ENCODE measurements at regions of chr10 and their contacts with region 1.

Region 1: GRCh38 chr10:68988530-68989316 is at the start of gene KIFBP:
- DNase-seq: peak; percentile 47 to 95 (median 79)
- ATAC-seq: peak; percentile 81
- H3K4me3 ChIP-seq: peak within 1 kb of the TSS; percentile 68 to 85
- H3K4me3 Mint-ChIP-seq: peak within 1 kb of the TSS; percentile 99
- H3K27ac ChIP-seq: peak within 1 kb of the TSS; percentile 31 to 79
- H3K27ac Mint-ChIP-seq: peak within 1 kb of the TSS; percentile 95
- H3K4me1 ChIP-seq: peaks cover 29% of the 10 kb centered on the region
- H3K4me1 Mint-ChIP-seq: peaks cover 56% of the 10 kb centered on the region
- H3K27me3 ChIP-seq: no peaks in the 10 kb centered on the region
- H3K27me3 Mint-ChIP-seq: no peaks in the 10 kb centered on the region
- CTCF ChIP-seq: peak; percentile 41
- total RNA-seq, gene KIFBP: 4.6 to 5.8 TPM

Region 2: GRCh38 chr10:68963151-68963550 is 25.6 kb before region 1 on chr10:
- CTCF ChIA-PET with region 1: no interaction called
- POLR2A ChIA-PET with region 1: no interaction called
- intact Hi-C with region 1: loop called in 1 of 2 experiments (anchors 2 kb)
- DNase-seq: no peak
- ATAC-seq: no peak
- H3K4me3 ChIP-seq: no peak overlapping the region
- H3K4me3 Mint-ChIP-seq: no peak overlapping the region
- H3K27ac ChIP-seq: no peak overlapping the region
- H3K27ac Mint-ChIP-seq: no peak overlapping the region
- H3K4me1 ChIP-seq: peaks cover 9% of the 10 kb centered on the region
- H3K4me1 Mint-ChIP-seq: peaks cover 30% of the 10 kb centered on the region
- H3K27me3 ChIP-seq: no peaks in the 10 kb centered on the region
- H3K27me3 Mint-ChIP-seq: no peaks in the 10 kb centered on the region
- CTCF ChIP-seq: no peak

Region 3: GRCh38 chr10:69186524-69186923 is 197.8 kb after region 1 on chr10:
- CTCF ChIA-PET with region 1: no interaction called
- POLR2A ChIA-PET with region 1: no interaction called
- intact Hi-C with region 1: loop called in 1 of 2 experiments (anchors 5 kb)
- DNase-seq: no peak
- ATAC-seq: no peak
- H3K4me3 ChIP-seq: no peak overlapping the region
- H3K4me3 Mint-ChIP-seq: no peak overlapping the region
- H3K27ac ChIP-seq: no peak overlapping the region
- H3K27ac Mint-ChIP-seq: no peak overlapping the region
- H3K4me1 ChIP-seq: peaks cover 8% of the 10 kb centered on the region
- H3K4me1 Mint-ChIP-seq: peaks cover 26% of the 10 kb centered on the region
- H3K27me3 ChIP-seq: no peaks in the 10 kb centered on the region
- H3K27me3 Mint-ChIP-seq: no peaks in the 10 kb centered on the region
- CTCF ChIP-seq: no peak